ENCODE measurements at regions of chr11 and their contacts with region 1.

Region 1: DNA sequence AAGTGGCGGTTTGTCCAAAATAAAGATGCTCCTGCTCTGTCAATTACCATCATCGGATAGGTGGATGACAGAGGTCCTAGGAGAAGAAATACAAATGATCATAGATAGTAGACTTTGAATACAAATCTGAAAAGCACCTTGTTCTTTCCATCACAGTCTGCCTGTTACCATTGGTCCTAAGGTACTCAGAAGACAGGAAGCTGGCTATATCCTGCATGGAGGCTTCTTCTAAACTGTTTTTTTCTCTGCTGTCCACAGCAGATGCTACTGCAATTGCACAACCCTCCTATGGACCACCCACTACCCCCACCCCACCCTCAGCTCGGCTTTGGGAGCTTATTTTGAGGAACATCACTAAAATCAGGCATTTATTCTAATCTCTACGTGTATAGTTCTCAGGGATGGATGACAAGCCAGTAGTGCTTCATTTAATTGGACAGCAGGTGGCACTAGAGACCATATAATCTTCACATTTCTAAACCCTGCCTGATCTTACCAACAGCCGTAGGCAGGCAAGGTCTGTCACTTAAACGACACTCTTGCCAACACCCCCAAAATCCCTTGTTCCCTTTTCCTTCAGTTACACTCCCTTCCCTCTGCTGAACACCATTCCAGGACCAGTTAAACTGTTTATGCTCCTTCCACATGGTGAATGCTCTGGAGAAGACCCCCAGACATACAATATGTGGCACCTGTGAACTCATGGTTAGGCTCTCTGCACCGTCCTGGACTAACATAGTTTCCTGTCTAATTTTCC is 6.6 kb upstream of the PTS start:
- DNase-seq: peak; percentile 56
- H3K4me3 ChIP-seq: no peak overlapping the region
- H3K27ac ChIP-seq: no peak overlapping the region
- H3K4me1 ChIP-seq: peaks cover 0 to 21% (median 17%) of the 10 kb centered on the region in 4 donors
- H3K27me3 ChIP-seq: no peaks in the 10 kb centered on the region
- CTCF ChIP-seq: peak; percentile 75 to 82 (median 76)
- EP300 ChIP-seq: no peak
- POLR2A ChIP-seq: no peak

Region 2: DNA sequence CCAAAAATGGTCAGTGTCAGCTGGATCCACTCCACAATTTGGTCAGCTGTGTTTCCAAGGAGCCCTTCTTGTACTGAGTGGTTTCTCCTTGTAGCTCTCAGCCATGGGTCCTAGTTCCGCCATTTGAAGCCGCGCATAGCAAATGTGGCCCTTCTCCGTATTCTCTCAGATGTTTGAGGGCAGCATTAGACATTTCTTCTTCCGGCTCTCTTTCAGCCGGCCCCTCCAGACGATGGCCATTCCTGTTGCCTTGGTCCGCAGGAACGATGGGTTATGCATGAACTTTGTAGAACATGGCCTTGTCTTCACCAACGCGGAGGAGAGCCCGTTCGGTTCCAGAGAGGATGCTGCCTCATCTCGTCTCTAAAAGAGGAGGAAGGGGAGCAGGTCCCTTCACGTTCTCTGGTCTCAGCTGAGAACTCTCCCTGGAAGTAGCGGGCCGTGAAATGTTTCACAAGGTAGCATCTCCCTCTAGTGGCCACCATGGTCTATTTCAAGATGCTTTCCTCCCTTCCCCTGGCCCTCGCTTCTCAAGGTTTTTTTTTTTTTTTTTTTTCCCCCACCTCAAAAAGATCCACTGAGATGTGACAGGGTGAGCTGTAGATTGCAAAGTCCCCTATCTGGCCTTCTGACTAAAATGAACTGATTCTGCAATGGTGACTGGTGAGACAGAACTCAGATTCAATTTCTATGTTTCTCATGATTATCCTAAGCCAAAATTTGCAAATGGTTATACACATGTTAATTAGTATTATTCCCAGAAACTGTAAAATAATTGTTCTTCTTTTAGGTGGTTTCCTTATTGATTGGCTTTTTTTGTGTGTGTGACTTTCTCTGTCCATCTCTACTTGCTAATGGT is 60.8 kb after region 1 on chr11:
- intact Hi-C with region 1: loop called (anchors 1 kb)
- DNase-seq: peak; percentile 82
- H3K4me3 ChIP-seq: peak overlapping the region; percentile 19 to 55 (median 46)
- H3K27ac ChIP-seq: peak overlapping the region; percentile 33 to 71 (median 54)
- H3K4me1 ChIP-seq: peaks cover 0 to 5% (median 3%) of the 10 kb centered on the region in 4 donors
- H3K27me3 ChIP-seq: no peaks in the 10 kb centered on the region
- CTCF ChIP-seq: peak; percentile 55 to 75 (median 68)
- EP300 ChIP-seq: no peak
- POLR2A ChIP-seq: no peak

Region 3: GRCh38 chr11:112310419-112310818 is 90.8 kb after region 1 on chr11:
- intact Hi-C with region 1: no loop called
- DNase-seq: no peak
- H3K4me3 ChIP-seq: no peak overlapping the region
- H3K27ac ChIP-seq: no peak overlapping the region
- H3K4me1 ChIP-seq: no peaks in the 10 kb centered on the region
- H3K27me3 ChIP-seq: no peaks in the 10 kb centered on the region
- CTCF ChIP-seq: no peak
- EP300 ChIP-seq: no peak
- POLR2A ChIP-seq: no peak

Measured in sigmoid colon (tissue), 7 donors.